ENCODE measurements at regions of chr10 and their contacts with region 1.

Region 1: DNA sequence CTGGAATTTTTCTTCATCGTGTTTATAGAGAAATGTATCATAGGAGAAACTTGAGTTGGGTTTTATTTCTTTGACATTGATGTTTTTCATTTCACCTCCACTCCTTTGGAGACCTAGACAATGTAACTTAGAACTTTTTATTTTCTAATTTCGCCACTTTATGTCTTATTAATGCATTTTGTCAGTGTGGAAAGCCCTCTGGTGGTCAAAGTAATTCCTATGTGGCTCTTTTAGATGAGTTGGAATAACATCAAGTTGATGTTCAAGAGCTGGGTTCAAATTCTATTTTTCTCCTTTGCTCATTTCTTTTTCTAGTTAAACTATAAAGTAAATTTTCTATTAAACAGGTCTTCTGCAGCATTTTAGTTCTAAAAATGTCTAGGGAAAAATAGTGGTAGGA is 478.6 kb downstream of the LRMDA start:
- DNase-seq: peak; percentile 26
- ATAC-seq: no peak
- H3K4me3 ChIP-seq: no peak overlapping the region
- H3K27ac ChIP-seq: no peak overlapping the region
- H3K4me1 ChIP-seq: no peaks in the 10 kb centered on the region
- H3K27me3 ChIP-seq: no peaks in the 10 kb centered on the region
- CTCF ChIP-seq: peak; percentile 28; the same call in 1 of the 2 replicates
- EP300 ChIP-seq: no peak
- POLR2A ChIP-seq: no peak
- RAD21 ChIP-seq: no peak

Region 2: DNA sequence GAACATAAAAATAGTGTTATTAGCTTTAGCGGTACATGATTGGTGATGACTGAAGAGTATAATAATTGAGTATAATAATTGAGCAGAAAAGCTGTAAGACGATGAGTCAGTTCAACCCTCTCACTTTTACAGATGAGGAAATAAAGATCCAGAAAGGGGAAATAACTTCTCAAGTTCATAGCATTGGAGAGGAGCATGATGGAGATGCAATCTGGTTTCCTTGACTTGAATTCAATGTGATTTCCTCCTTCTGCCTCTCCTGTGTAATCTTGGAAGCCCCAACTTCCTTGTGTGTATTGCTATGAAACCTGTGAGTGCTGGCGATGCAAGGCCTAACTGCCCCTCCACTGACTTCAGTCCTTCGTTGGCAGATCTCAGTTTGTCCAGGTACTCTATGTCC is 213.5 kb before region 1 on chr10:
- CTCF ChIA-PET with region 1: no interaction called
- POLR2A ChIA-PET with region 1: no interaction called
- in situ Hi-C with region 1: no loop called
- intact Hi-C with region 1: no loop called
- DNase-seq: no peak
- ATAC-seq: no peak
- H3K4me3 ChIP-seq: no peak overlapping the region
- H3K27ac ChIP-seq: no peak overlapping the region
- H3K4me1 ChIP-seq: peaks cover 9% of the 10 kb centered on the region; the same call in 1 of the 2 replicates
- H3K27me3 ChIP-seq: no peaks in the 10 kb centered on the region
- CTCF ChIP-seq: no peak
- EP300 ChIP-seq: no peak
- POLR2A ChIP-seq: no peak
- RAD21 ChIP-seq: no peak

Region 3: GRCh38 chr10:76036111-76036940 is 126.3 kb after region 1 on chr10:
- CTCF ChIA-PET with region 1: no interaction called
- POLR2A ChIA-PET with region 1: no interaction called
- in situ Hi-C with region 1: no loop called
- intact Hi-C with region 1: loop called (anchors 5 kb)
- DNase-seq: no peak
- ATAC-seq: 0 out of 3 replicates have a peak, but pooled peaks have one; percentile 15
- H3K4me3 ChIP-seq: no peak overlapping the region
- H3K27ac ChIP-seq: peak overlapping the region; percentile 97
- H3K4me1 ChIP-seq: peaks cover 57% of the 10 kb centered on the region
- H3K27me3 ChIP-seq: no peaks in the 10 kb centered on the region; a peak in 1 of 5 replicates
- CTCF ChIP-seq: peak; percentile 85
- EP300 ChIP-seq: no peak
- POLR2A ChIP-seq: no peak
- RAD21 ChIP-seq: peak; percentile 79